ENCODE measurements at regions of chr12 and their contacts with region 1.

Region 1: DNA sequence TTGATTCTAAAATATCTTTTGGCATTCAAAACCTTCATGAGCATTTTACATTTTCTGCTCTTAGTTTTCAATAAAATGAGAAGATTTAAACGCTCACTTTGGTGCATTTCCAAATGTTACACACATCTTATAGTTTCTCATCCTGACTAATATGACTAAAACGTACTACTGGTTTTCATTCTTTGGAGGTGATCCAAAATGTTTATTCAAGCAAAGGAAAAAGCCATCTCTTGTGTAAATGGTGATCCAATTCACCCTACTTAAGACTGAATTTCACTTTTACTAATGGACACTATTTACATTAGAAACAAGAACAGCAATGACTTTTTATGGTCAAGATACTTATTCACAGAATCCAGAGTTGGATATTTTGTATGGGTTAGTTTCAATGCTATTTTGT is 86.6 kb downstream of the KITLG start:
- DNase-seq: no peak
- H3K4me3 ChIP-seq: no peak overlapping the region
- H3K4me3 Mint-ChIP-seq: no peak overlapping the region
- H3K27ac Mint-ChIP-seq: no peak overlapping the region
- H3K4me1 ChIP-seq: no peaks in the 10 kb centered on the region
- H3K4me1 Mint-ChIP-seq: no peaks in the 10 kb centered on the region
- H3K27me3 ChIP-seq: no peaks in the 10 kb centered on the region
- H3K27me3 Mint-ChIP-seq: no peaks in the 10 kb centered on the region
- CTCF ChIP-seq: no peak

Region 2: GRCh38 chr12:88111074-88111652 is 382.5 kb before region 1 on chr12:
- CTCF ChIA-PET with region 1: no interaction called
- POLR2A ChIA-PET with region 1: no interaction called
- intact Hi-C with region 1: loop called (anchors 5 kb)
- DNase-seq: peak in 1 of 2 experiments; percentile 26
- H3K4me3 ChIP-seq: no peak overlapping the region
- H3K4me3 Mint-ChIP-seq: no peak overlapping the region
- H3K27ac Mint-ChIP-seq: no peak overlapping the region
- H3K4me1 ChIP-seq: peaks cover 4% of the 10 kb centered on the region; the same call in 1 of the 2 replicates
- H3K4me1 Mint-ChIP-seq: peaks cover 13% of the 10 kb centered on the region
- H3K27me3 ChIP-seq: no peaks in the 10 kb centered on the region
- H3K27me3 Mint-ChIP-seq: no peaks in the 10 kb centered on the region
- CTCF ChIP-seq: peak; percentile 34 to 56

Region 3: DNA sequence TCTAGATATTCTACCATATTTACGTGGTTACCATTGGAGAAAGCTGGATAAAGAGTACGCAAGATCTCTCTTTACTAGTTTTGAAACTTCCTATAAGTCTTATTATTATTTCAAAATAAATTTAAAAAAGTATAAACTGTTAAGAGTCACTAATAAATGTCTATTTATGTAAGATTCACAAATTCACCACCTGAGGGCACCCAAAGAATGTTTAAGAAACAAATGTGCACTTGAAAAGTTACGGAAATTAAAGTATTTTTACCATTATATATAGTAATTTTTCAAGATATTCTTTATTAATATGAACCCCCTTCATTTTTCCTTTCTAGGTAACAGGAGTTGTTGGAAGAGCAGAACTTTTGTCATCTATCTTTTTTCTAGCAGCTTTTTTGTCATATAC is 339.7 kb before region 1 on chr12:
- CTCF ChIA-PET with region 1: no interaction called
- POLR2A ChIA-PET with region 1: no interaction called
- intact Hi-C with region 1: loop called (anchors 10 kb)
- DNase-seq: peak in 1 of 2 experiments; percentile 27
- H3K4me3 ChIP-seq: no peak overlapping the region
- H3K4me3 Mint-ChIP-seq: no peak overlapping the region
- H3K27ac Mint-ChIP-seq: no peak overlapping the region
- H3K4me1 ChIP-seq: no peaks in the 10 kb centered on the region
- H3K4me1 Mint-ChIP-seq: no peaks in the 10 kb centered on the region
- H3K27me3 ChIP-seq: no peaks in the 10 kb centered on the region
- H3K27me3 Mint-ChIP-seq: no peaks in the 10 kb centered on the region
- CTCF ChIP-seq: peak in 1 of 2 experiments; percentile 47

Region 4: DNA sequence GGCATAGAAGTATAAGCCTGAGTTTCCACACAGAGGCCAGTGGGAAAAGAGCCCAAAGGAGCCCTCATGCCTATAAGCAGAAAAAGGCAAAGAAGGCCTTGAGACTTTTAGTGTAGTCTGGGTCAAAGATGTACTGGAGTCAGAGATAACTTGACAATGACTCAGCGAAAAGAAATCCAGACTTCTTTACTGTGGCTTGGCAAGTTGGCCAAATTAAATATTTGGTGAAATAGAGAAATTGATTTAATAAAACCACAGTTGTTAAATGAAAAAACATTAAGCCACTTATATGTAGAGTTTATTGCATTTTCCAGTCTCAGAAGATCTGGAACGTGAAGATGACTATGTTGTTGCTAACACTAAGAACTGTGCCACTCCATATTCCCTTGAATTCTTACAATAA is 246.4 kb before region 1 on chr12:
- CTCF ChIA-PET with region 1: no interaction called
- POLR2A ChIA-PET with region 1: no interaction called
- intact Hi-C with region 1: no loop called
- DNase-seq: no peak
- H3K4me3 ChIP-seq: no peak overlapping the region
- H3K4me3 Mint-ChIP-seq: no peak overlapping the region
- H3K27ac Mint-ChIP-seq: no peak overlapping the region
- H3K4me1 ChIP-seq: peaks cover 8% of the 10 kb centered on the region; the same call in 1 of the 2 replicates
- H3K4me1 Mint-ChIP-seq: peaks cover 13% of the 10 kb centered on the region
- H3K27me3 ChIP-seq: no peaks in the 10 kb centered on the region
- H3K27me3 Mint-ChIP-seq: no peaks in the 10 kb centered on the region
- CTCF ChIP-seq: no peak

Region 5: DNA sequence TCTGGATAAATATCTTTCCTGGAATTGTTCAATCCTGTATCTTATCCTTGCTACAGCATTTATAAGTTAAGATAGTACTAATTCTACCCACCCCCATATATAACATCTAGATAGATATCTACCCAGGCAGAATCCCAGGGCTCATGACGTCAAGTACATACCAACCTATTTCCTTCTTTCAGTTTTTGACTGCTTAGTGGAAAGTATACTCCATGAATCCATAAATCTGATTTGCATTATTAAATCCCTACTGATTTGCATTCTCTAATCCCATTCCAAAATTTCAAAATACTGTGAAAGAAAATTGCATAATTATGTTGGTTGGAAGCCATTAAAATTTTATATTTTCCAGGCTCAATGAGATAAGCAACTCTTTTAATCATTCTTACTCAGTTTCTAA is 25.1 kb before region 1 on chr12:
- CTCF ChIA-PET with region 1: no interaction called
- POLR2A ChIA-PET with region 1: no interaction called
- intact Hi-C with region 1: loop called (anchors 1 kb)
- DNase-seq: no peak
- H3K4me3 ChIP-seq: no peak overlapping the region
- H3K4me3 Mint-ChIP-seq: no peak overlapping the region
- H3K27ac Mint-ChIP-seq: no peak overlapping the region
- H3K4me1 ChIP-seq: no peaks in the 10 kb centered on the region
- H3K4me1 Mint-ChIP-seq: no peaks in the 10 kb centered on the region
- H3K27me3 ChIP-seq: no peaks in the 10 kb centered on the region
- H3K27me3 Mint-ChIP-seq: no peaks in the 10 kb centered on the region
- CTCF ChIP-seq: no peak

Region 6: DNA sequence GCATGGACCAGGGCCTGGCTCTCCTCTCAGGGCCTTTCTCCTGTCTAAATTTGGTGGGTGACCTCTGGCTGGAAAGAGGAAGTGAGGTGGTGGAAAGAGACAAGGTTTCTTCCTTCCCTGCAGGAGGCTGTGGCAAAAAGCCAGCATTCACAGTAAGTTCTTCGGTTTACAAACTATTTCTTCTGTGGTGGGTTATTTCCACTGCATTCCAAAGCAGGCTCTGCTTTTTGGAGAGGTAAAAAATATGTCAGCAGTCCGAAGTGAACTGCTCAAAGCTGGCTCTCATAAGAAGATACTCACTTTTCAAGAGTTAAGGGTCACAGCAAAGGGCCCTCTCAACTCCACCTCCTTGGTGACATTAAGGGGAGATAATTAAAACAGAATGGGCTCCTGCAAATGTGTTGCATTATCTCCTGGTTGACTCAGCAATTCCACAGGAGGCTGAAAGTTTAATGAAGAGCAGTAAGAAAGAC is 1081.1 kb after region 1 on chr12:
- CTCF ChIA-PET with region 1: no interaction called
- POLR2A ChIA-PET with region 1: no interaction called
- intact Hi-C with region 1: no loop called
- DNase-seq: no peak
- H3K4me3 ChIP-seq: no peak overlapping the region
- H3K4me3 Mint-ChIP-seq: no peak overlapping the region
- H3K27ac Mint-ChIP-seq: no peak overlapping the region
- H3K4me1 ChIP-seq: peaks cover 11% of the 10 kb centered on the region
- H3K4me1 Mint-ChIP-seq: peaks cover 23% of the 10 kb centered on the region
- H3K27me3 ChIP-seq: no peaks in the 10 kb centered on the region
- H3K27me3 Mint-ChIP-seq: no peaks in the 10 kb centered on the region
- CTCF ChIP-seq: no peak